Right cardiac atrium (tissue), 5 donors: ENCODE measurements at regions of chr3 and their contacts with region 1.

Region 1: GRCh38 chr3:37210230-37210629 is 35.8 kb upstream of the LRRFIP2 start:
- DNase-seq: no peak
- ATAC-seq: peak; percentile 31 to 71
- H3K4me3 ChIP-seq: no peak overlapping the region
- H3K27ac ChIP-seq: peak overlapping the region; percentile 83
- H3K4me1 ChIP-seq: no peaks in the 10 kb centered on the region
- H3K27me3 ChIP-seq: no peaks in the 10 kb centered on the region

Region 2: DNA sequence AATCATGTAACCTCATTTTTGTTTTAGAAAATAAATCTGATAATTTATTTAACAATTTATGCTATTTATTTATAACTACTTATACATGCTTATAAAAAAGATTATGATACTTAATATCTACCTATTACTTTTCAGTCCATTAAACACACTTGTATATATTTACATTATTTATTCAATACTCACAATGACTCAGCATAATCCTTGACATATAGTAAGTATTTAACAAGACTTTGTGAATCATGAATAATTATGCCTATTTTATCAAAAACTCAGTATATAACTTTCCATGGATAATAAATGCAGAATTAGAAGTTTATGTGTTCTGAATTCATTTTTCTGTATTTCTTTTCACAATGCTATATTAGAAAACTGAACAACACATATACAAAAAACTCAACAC is 1095.9 kb before region 1 on chr3:
- intact Hi-C with region 1: no loop called
- DNase-seq: no peak
- ATAC-seq: no peak
- H3K4me3 ChIP-seq: no peak overlapping the region
- H3K27ac ChIP-seq: no peak overlapping the region
- H3K4me1 ChIP-seq: no peaks in the 10 kb centered on the region
- H3K27me3 ChIP-seq: no peaks in the 10 kb centered on the region

Region 3: GRCh38 chr3:37024092-37024491 is 186.1 kb before region 1 on chr3:
- intact Hi-C with region 1: loop called (anchors 5 to 10 kb)
- DNase-seq: no peak
- ATAC-seq: no peak
- H3K4me3 ChIP-seq: no peak overlapping the region
- H3K27ac ChIP-seq: no peak overlapping the region
- H3K4me1 ChIP-seq: no peaks in the 10 kb centered on the region
- H3K27me3 ChIP-seq: no peaks in the 10 kb centered on the region

Region 4: GRCh38 chr3:37435572-37435971 is 225.3 kb after region 1 on chr3:
- intact Hi-C with region 1: no loop called
- DNase-seq: no peak
- ATAC-seq: no peak
- H3K4me3 ChIP-seq: no peak overlapping the region
- H3K27ac ChIP-seq: no peak overlapping the region
- H3K4me1 ChIP-seq: no peaks in the 10 kb centered on the region
- H3K27me3 ChIP-seq: no peaks in the 10 kb centered on the region